B cell (primary cell): ENCODE measurements at regions of chr12 and their contacts with region 1.

Region 1: DNA sequence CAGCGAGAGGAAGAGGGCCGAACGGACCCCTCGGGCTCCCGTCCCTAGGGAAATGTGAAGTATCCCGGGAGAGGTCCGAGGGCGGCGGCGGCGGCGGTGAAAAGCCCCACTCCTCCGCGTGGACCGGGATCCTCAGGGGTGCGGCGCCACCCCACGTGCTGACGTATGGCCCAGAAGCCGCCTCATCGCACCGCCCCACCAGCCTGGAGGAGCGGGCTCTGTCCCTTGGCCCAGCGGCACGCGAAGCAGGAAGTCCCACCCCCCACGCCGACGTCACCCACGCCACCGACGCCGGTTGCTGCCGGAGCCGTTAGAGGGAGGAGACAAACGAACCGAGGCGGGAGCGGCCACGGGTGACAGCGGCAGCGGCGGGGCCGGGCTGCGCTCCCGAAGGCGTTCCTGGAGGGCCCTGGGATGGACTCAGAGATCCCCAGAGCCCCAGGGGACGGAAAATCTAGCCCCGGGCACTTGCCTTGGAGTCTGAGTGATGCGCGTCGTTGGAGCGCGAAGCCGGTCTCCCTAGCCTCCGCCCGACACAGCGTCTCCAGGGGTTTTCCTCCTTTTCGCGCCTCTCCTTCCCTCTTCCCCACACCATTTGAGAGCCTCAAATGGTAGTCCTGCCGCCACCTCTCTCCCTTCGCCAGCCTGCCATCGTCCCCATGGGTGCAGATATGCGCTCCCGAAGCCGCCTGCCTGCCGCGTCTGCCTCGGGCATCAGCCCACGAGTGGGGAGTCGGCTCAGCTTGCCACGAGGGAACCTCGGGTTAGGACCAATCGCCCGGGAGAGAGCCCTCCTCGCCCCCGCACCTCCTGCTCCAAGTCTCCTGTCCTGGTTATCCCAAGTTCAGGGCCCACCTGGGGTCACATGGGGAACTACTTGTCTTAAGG is at the start of gene CEP83:
- DNase-seq: peak; percentile 97
- ATAC-seq: peak; percentile 96
- H3K4me3 ChIP-seq: peak within 1 kb of the TSS; percentile 77 to 95 (median 88)
- H3K4me3 Mint-ChIP-seq: peak within 1 kb of the TSS; percentile 97
- H3K27ac ChIP-seq: peak within 1 kb of the TSS; percentile 92 to 96
- H3K27ac Mint-ChIP-seq: peak within 1 kb of the TSS; percentile 94
- H3K4me1 ChIP-seq: peaks cover 11 to 19% of the 10 kb centered on the region in 2 donors
- H3K4me1 Mint-ChIP-seq: peaks cover 23% of the 10 kb centered on the region
- H3K27me3 ChIP-seq: no peaks in the 10 kb centered on the region
- H3K27me3 Mint-ChIP-seq: no peaks in the 10 kb centered on the region
- CTCF ChIP-seq: no peak
- total RNA-seq, gene CEP83: 24.8 and 27.2 TPM in 2 replicates

Region 2: GRCh38 chr12:93441617-93442410 is 1018.2 kb before region 1 on chr12 and contains the start of gene UBE2N:
- CTCF ChIA-PET with region 1: no interaction called
- POLR2A ChIA-PET with region 1: no interaction called
- intact Hi-C with region 1: loop called (anchors 5 kb)
- DNase-seq: peak; percentile 97
- ATAC-seq: peak; percentile 85
- H3K4me3 ChIP-seq: peak within 1 kb of the TSS; percentile 65 to 92 (median 84)
- H3K4me3 Mint-ChIP-seq: peak within 1 kb of the TSS; percentile 94
- H3K27ac ChIP-seq: peak within 1 kb of the TSS; percentile 88 to 97
- H3K27ac Mint-ChIP-seq: peak within 1 kb of the TSS; percentile 96
- H3K4me1 ChIP-seq: peaks cover 41 to 46% of the 10 kb centered on the region in 2 donors
- H3K4me1 Mint-ChIP-seq: peaks cover 48% of the 10 kb centered on the region
- H3K27me3 ChIP-seq: no peaks in the 10 kb centered on the region
- H3K27me3 Mint-ChIP-seq: no peaks in the 10 kb centered on the region
- CTCF ChIP-seq: no peak
- total RNA-seq, gene UBE2N: 81.7 and 83.8 TPM in 2 replicates

Region 3: DNA sequence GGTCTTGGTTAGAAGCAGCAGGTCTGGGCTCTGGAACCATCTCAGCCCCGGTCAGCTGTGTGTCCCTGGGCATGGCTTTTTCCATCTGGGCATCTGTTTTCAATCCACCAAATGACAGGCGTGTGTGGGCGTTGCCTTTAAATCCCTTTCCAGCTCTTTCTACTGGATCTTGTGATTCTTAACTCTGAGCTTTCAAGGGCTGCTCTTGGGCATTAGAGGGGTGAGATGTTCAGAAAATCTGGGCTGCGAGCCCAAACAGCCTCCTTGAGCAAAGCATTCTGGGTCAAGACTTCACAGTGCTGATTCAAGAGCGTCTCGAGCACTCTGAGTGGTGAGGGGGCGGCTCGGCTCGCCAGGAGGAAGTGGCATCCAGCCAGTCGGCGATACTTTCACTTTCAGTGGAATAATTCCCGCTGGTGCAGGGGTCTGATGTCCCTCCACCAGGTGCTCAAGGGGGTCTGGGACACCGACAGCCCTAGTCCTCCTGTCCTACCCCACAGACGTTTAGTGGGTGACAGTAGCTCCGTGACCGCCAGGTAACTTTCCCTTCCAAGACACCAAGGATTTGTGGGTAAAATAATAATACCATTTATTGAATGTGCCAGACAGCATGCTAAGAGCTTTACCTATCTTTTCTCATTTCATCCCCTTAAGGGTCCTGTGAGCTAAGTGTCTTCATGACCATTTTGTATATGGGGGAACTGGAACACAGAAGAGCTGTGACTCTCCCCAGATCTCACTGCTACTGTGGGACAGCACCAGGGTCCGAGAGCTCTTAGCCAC is 197.6 kb before region 1 on chr12:
- CTCF ChIA-PET with region 1: no interaction called
- POLR2A ChIA-PET with region 1: no interaction called
- intact Hi-C with region 1: loop called (anchors 1 kb)
- DNase-seq: peak; percentile 86
- ATAC-seq: peak; percentile 82
- H3K4me3 ChIP-seq: peak overlapping the region; percentile 48 to 77 (median 64)
- H3K4me3 Mint-ChIP-seq: peak overlapping the region; percentile 99
- H3K27ac ChIP-seq: peak overlapping the region; percentile 81 to 90
- H3K27ac Mint-ChIP-seq: peak overlapping the region; percentile 99
- H3K4me1 ChIP-seq: peaks cover 45% of the 10 kb centered on the region in 2 donors
- H3K4me1 Mint-ChIP-seq: peaks cover 58% of the 10 kb centered on the region
- H3K27me3 ChIP-seq: no peaks in the 10 kb centered on the region
- H3K27me3 Mint-ChIP-seq: no peaks in the 10 kb centered on the region
- CTCF ChIP-seq: no peak

Region 4: GRCh38 chr12:94831081-94831751 is 371.2 kb after region 1 on chr12:
- CTCF ChIA-PET with region 1: no interaction called
- POLR2A ChIA-PET with region 1: no interaction called
- intact Hi-C with region 1: loop called (anchors 1 kb)
- DNase-seq: peak; percentile 86
- ATAC-seq: peak; percentile 94
- H3K4me3 ChIP-seq: peak overlapping the region in 2 of 5 experiments; percentile 5 to 23
- H3K4me3 Mint-ChIP-seq: peak overlapping the region; percentile 95
- H3K27ac ChIP-seq: peak overlapping the region; percentile 92 to 94
- H3K27ac Mint-ChIP-seq: peak overlapping the region; percentile 100
- H3K4me1 ChIP-seq: peaks cover 39% of the 10 kb centered on the region in 2 donors
- H3K4me1 Mint-ChIP-seq: peaks cover 47% of the 10 kb centered on the region
- H3K27me3 ChIP-seq: no peaks in the 10 kb centered on the region
- H3K27me3 Mint-ChIP-seq: no peaks in the 10 kb centered on the region
- CTCF ChIP-seq: no peak